Heart left ventricle (tissue), 16 donors: ENCODE measurements at regions of chr5 and their contacts with region 1.

Region 1: DNA sequence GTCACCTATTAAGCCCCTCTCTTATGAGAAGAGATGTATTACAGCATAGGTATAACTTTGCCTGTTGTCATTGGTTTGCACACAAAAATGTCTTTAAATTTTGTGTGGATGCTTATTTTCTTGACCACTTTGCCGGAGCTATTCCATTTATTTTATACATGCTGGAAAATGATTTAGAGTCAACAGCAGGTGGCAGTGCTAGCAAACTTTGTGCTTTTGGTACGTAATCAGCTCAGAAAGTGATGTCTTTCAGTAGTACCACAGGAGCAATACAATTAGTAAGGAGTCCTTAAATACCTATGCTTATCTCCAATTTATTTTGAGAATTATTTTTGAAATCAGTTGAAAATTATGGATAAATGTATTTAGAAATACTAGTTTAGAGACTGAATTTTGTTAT is 19.8 kb upstream of the NUDT12 start:
- DNase-seq: peak in 1 of 5 donors; percentile 19
- ATAC-seq: no peak
- H3K4me3 ChIP-seq: no peak overlapping the region
- H3K27ac ChIP-seq: no peak overlapping the region
- H3K4me1 ChIP-seq: no peaks in the 10 kb centered on the region
- H3K27me3 ChIP-seq: no peaks in the 10 kb centered on the region
- CTCF ChIP-seq: peak; percentile 15 to 64 (median 48)
- POLR2A ChIP-seq: no peak

Region 2: DNA sequence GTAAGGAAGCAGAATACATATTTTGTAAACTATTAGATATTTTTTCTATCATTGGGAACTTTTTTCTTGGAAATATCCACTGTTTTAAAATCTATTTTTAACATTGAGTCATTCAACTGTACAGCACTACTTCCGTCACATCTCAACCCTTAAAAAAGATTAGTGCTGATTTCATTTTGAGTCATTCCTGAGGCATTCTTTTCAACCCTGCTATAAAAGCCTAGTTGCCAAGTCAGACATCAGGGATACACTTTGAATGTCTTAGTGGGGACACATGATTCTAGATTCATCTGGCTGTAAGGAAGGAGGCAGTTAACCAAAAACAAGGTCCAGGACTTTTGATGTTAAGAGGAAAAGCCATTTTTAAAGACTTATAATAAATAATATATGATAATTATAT is 623.3 kb before region 1 on chr5:
- intact Hi-C with region 1: no loop called
- DNase-seq: no peak
- ATAC-seq: peak in 3 of 4 donors; percentile 67 to 88 (median 78)
- H3K4me3 ChIP-seq: no peak overlapping the region
- H3K27ac ChIP-seq: peak overlapping the region in 9 of 12 donors; percentile 9 to 59 (median 51)
- H3K4me1 ChIP-seq: peaks cover 0 to 18% (median 12%) of the 10 kb centered on the region in 12 donors
- H3K27me3 ChIP-seq: no peaks in the 10 kb centered on the region
- CTCF ChIP-seq: no peak
- POLR2A ChIP-seq: no peak

Region 3: DNA sequence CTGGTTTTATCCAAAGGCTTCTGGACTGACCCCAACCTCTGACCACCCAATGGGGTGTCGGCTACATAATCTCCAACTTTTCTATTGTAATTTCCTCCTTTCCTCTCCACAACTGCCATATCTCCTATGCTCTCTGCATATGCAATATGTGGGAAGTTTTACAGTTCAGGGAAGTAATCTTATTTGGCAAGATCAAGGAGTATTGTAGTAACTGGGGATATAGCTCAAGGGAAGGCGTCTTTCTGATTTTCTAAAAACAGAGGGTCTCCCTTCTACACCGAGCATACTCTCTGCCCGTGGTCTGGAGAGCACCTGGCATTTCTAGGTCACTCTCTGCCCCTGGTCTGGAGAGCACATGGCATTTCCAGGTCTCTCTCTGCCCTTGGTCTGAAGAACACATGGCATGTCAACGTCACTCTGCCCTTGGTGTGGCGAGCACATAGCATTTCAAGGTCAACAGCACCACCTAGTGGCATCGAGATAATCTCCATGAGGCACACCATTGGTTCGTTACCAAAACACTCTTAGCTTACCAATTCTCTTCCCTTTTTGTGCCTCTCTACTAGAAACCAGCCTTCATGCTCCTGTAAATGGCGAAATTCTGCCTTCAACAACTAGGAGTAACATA is 596.6 kb after region 1 on chr5:
- intact Hi-C with region 1: loop called in 8 of 10 experiments (anchors 5 to 10 kb)
- DNase-seq: peak in 1 of 5 donors; percentile 16
- ATAC-seq: no peak
- H3K4me3 ChIP-seq: no peak overlapping the region
- H3K27ac ChIP-seq: no peak overlapping the region
- H3K4me1 ChIP-seq: no peaks in the 10 kb centered on the region
- H3K27me3 ChIP-seq: no peaks in the 10 kb centered on the region
- CTCF ChIP-seq: peak in 10 of 12 donors; percentile 8 to 50 (median 24)
- POLR2A ChIP-seq: no peak

Region 4: DNA sequence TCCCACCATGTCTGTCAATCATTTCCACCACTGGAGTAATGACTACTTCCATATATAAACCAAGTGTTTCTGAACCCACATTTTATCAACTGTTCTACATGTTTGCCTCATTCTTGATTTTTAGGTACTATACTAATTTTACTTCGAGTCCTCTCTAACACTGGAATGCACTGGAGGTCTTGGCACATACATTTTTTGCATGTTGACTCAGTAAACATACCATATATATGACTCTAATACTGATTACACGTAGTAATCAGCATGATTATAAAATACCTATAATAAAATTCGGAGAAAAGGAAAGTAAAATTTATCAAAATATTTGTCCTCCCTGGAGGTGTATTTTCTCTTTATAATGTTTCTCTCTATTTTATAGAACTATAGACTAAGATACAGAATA is 601.9 kb after region 1 on chr5:
- intact Hi-C with region 1: loop called in 8 of 10 experiments (anchors 5 to 10 kb)
- DNase-seq: no peak
- ATAC-seq: no peak
- H3K4me3 ChIP-seq: no peak overlapping the region
- H3K27ac ChIP-seq: no peak overlapping the region
- H3K4me1 ChIP-seq: no peaks in the 10 kb centered on the region
- H3K27me3 ChIP-seq: no peaks in the 10 kb centered on the region
- CTCF ChIP-seq: no peak
- POLR2A ChIP-seq: no peak